ENCODE measurements at regions of chr1 and their contacts with region 1.

Region 1: DNA sequence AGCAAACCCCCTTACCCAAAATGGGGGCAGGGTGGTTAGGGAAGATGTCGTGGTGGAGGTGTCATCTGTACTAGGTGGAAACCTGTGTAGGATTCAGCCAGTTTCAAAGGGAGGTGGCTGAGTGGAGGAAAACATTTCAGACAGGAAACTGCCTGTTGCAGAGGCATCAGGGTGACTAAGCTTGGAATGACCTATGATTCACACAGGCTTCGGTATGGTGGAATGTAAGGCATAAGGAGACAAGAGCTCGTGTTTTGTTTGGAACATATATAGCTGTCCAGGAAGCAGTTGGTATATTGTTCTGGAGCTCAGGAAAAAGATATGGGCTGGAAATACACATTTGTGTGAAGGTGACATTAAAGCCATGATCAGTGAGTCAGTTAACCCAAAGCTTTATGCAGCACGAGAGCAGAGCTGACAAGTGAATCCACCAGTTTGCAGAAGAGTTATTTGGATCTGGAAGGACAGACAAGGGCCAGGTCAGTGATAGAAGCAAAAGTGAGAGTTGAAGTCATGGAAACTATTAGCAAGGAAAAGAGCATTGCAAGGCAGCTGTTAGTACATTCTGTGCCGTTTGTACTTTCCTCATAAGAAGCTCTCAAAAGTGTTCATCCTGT is 12.2 kb downstream of the UTP25 start:
- DNase-seq: peak; percentile 99
- H3K4me3 ChIP-seq: peak overlapping the region in 1 of 3 experiments; percentile 2
- H3K27ac ChIP-seq: peak overlapping the region; percentile 80
- H3K4me1 ChIP-seq: peaks cover 61% of the 10 kb centered on the region
- H3K27me3 ChIP-seq: no peaks in the 10 kb centered on the region
- CTCF ChIP-seq: no peak
- POLR2A ChIP-seq: peak; percentile 10

Region 2: GRCh38 chr1:209790286-209791193 is 49.4 kb before region 1 on chr1:
- CTCF ChIA-PET with region 1: no interaction called
- POLR2A ChIA-PET with region 1: no interaction called
- dilution Hi-C with region 1: no loop called
- intact Hi-C with region 1: no loop called
- DNase-seq: no peak
- H3K4me3 ChIP-seq: no peak overlapping the region
- H3K27ac ChIP-seq: no peak overlapping the region
- H3K4me1 ChIP-seq: no peaks in the 10 kb centered on the region
- H3K27me3 ChIP-seq: no peaks in the 10 kb centered on the region
- CTCF ChIP-seq: no peak
- POLR2A ChIP-seq: no peak

Region 3: GRCh38 chr1:209805875-209806760 is 33.9 kb before region 1 on chr1 and contains the start of gene IRF6:
- CTCF ChIA-PET with region 1: interaction called, 4 read pairs
- POLR2A ChIA-PET with region 1: interaction called, 6 read pairs
- dilution Hi-C with region 1: no loop called
- intact Hi-C with region 1: loop called (anchors 1 kb)
- DNase-seq: peak; percentile 87
- H3K4me3 ChIP-seq: peak within 1 kb of the TSS in 2 of 3 experiments; percentile 51 to 81
- H3K27ac ChIP-seq: peak within 1 kb of the TSS; percentile 47
- H3K4me1 ChIP-seq: peaks cover 38% of the 10 kb centered on the region
- H3K27me3 ChIP-seq: no peaks in the 10 kb centered on the region
- CTCF ChIP-seq: no peak
- POLR2A ChIP-seq: peak; percentile 50
- total RNA-seq, gene IRF6: 22.1 and 42.0 TPM in 2 replicates

Region 4: DNA sequence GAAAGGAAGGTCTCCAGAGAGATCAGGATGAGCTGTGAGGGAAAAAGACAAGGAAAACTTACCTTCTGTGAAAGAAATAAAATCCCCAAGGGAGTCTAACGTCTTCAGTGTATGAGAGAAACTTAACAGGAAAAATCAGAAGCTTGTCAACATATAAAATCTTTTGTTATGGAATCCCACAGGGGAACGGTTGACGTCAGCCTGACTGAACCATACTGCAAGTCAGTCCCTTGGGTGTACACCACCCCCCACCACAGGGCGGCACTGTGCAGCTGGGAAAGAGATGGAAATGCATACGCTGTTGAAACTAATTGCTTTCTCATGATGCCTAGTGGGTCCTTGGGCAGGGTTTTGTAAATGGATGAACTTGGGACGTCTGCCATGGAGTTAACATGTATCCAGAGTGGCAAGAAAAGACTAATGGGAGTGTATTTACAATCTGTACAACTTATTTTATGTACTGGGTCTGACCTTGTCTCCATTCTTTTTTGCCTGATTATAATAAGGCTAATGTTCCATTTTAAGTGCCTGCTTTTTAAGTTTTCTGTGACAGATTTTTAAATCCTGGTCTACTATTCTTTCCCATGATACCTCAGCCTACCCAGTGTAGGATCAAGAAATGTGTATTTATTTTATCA is 10.5 kb after region 1 on chr1:
- CTCF ChIA-PET with region 1: interaction called, 18 read pairs
- POLR2A ChIA-PET with region 1: no interaction called
- dilution Hi-C with region 1: no loop called
- intact Hi-C with region 1: no loop called
- DNase-seq: peak; percentile 59
- H3K4me3 ChIP-seq: no peak overlapping the region
- H3K27ac ChIP-seq: no peak overlapping the region
- H3K4me1 ChIP-seq: no peaks in the 10 kb centered on the region
- H3K27me3 ChIP-seq: no peaks in the 10 kb centered on the region
- CTCF ChIP-seq: peak; percentile 70 to 76
- POLR2A ChIP-seq: no peak

Region 5: GRCh38 chr1:209884665-209885117 is 44.7 kb after region 1 on chr1:
- CTCF ChIA-PET with region 1: no interaction called
- POLR2A ChIA-PET with region 1: no interaction called
- dilution Hi-C with region 1: no loop called
- intact Hi-C with region 1: loop called (anchors 1 kb)
- DNase-seq: peak; percentile 97
- H3K4me3 ChIP-seq: no peak overlapping the region
- H3K27ac ChIP-seq: peak overlapping the region; percentile 71
- H3K4me1 ChIP-seq: peaks cover 21% of the 10 kb centered on the region
- H3K27me3 ChIP-seq: peaks cover 0 to 7% of the 10 kb centered on the region in 2 experiments
- CTCF ChIP-seq: no peak
- POLR2A ChIP-seq: peak; percentile 40

Region 6: DNA sequence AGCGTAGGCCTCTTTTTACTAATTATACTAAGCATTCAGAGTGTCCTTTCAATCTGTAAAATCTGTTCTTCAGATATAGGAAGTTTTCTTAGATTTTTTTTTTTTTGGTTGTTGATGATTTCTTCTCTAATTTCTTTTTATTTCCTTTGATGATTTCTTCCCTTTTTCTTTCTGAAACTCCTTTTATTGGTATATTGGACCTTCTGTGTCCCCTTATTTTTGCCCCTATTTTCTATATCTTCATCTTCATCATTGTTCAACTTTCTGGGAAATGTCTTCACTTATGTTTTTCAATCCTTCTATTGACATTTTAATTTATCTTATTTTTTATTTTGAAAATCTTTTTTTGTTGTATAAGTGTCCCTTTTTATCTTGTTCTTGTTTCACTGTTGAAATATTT is 80.9 kb after region 1 on chr1:
- CTCF ChIA-PET with region 1: no interaction called
- POLR2A ChIA-PET with region 1: no interaction called
- dilution Hi-C with region 1: no loop called
- intact Hi-C with region 1: no loop called
- DNase-seq: no peak
- H3K4me3 ChIP-seq: no peak overlapping the region
- H3K27ac ChIP-seq: no peak overlapping the region
- H3K4me1 ChIP-seq: no peaks in the 10 kb centered on the region
- H3K27me3 ChIP-seq: no peaks in the 10 kb centered on the region
- CTCF ChIP-seq: no peak
- POLR2A ChIP-seq: no peak

Region 7: DNA sequence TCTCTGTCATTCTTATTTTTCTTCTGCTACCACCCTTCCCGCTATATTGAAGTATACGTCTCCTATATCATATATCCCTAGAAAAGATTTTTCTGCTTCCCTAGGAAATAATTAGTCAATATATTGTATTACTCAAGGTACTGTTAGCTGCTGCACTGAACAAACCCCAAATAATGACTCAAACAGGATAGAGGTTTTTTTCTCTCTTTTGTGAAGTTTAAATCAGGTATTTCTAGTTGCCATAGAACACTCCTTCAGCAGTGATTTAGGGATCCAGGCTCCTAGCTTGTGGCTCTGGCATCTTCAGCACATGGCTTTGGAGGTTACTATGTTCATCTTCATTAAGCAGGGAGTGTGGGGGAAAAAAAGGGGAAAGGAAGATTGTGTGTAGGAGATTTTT is 116.1 kb after region 1 on chr1:
- CTCF ChIA-PET with region 1: no interaction called
- POLR2A ChIA-PET with region 1: no interaction called
- dilution Hi-C with region 1: no loop called
- intact Hi-C with region 1: no loop called
- DNase-seq: no peak
- H3K4me3 ChIP-seq: no peak overlapping the region
- H3K27ac ChIP-seq: no peak overlapping the region
- H3K4me1 ChIP-seq: no peaks in the 10 kb centered on the region
- H3K27me3 ChIP-seq: peaks cover 0 to 9% of the 10 kb centered on the region in 2 experiments
- CTCF ChIP-seq: no peak
- POLR2A ChIP-seq: no peak

Measured in endothelial cell of umbilical vein (primary cell).